CD4-positive, alpha-beta memory T cell (primary cell): ENCODE measurements at regions of chr3 and their contacts with region 1.

Region 1: DNA sequence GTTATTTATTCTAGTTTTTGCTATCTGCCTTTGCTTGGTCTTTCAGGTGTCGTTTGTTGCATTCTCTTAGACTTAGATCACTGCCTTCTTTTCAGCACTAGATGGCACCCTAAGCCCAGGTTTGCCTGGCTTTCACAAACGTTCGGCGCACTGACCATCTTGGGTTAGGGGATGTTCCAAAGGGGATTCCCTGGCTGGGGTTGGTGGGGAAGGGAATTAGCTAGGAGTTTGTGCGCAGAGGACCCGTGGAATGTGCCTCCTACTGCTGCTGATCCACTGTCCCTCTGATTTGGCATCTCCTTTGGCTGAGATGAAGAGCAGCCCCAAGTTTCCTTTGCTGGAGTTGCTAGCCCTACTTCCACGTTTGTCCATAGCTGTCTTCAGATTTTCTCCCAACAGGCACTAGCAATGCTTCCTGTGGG is 33.9 kb downstream of the PFN2 start:
- DNase-seq: peak; percentile 31 to 46 (median 39)
- H3K4me3 ChIP-seq: no peak overlapping the region
- H3K4me3 Mint-ChIP-seq: peak overlapping the region in 2 of 8 donors; percentile 23 to 47
- H3K27ac ChIP-seq: no peak overlapping the region
- H3K27ac Mint-ChIP-seq: peak overlapping the region in 1 of 7 donors; percentile 83
- H3K4me1 ChIP-seq: peaks cover 4% of the 10 kb centered on the region
- H3K4me1 Mint-ChIP-seq: peaks cover 11 to 22% (median 20%) of the 10 kb centered on the region in 4 donors
- H3K27me3 ChIP-seq: no peaks in the 10 kb centered on the region
- H3K27me3 Mint-ChIP-seq: no peaks in the 10 kb centered on the region

Region 2: GRCh38 chr3:149925860-149926259 is 11.0 kb before region 1 on chr3:
- CTCF ChIA-PET with region 1: interaction called, 16 read pairs
- POLR2A ChIA-PET with region 1: no interaction called
- intact Hi-C with region 1: no loop called
- DNase-seq: no peak
- H3K4me3 ChIP-seq: no peak overlapping the region
- H3K4me3 Mint-ChIP-seq: no peak overlapping the region
- H3K27ac ChIP-seq: no peak overlapping the region
- H3K27ac Mint-ChIP-seq: no peak overlapping the region
- H3K4me1 ChIP-seq: no peaks in the 10 kb centered on the region
- H3K4me1 Mint-ChIP-seq: peaks cover 5 to 6% (median 5%) of the 10 kb centered on the region in 4 donors
- H3K27me3 ChIP-seq: no peaks in the 10 kb centered on the region
- H3K27me3 Mint-ChIP-seq: no peaks in the 10 kb centered on the region

Region 3: DNA sequence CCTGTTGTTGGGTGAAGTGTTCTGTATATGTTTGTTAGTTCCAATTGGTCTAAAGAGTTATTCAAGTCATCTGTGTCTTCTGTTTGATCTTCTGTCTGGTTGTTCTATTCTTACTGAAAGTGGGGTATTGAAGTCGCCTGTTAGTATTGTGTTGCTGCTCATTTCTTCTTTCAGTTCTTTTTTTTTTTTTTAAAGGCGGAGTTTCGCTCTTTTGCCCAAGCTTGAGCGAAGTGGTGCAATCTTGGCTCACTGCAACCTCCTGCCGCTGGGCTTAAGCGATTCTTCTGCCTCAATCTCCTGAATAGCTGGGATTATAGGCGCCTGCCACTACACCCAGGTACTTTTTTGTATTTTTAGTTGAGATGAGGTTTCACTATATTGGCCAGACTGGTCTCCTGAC is 10.4 kb after region 1 on chr3:
- CTCF ChIA-PET with region 1: interaction called, 14 read pairs
- POLR2A ChIA-PET with region 1: no interaction called
- intact Hi-C with region 1: no loop called
- DNase-seq: no peak
- H3K4me3 ChIP-seq: no peak overlapping the region
- H3K4me3 Mint-ChIP-seq: no peak overlapping the region
- H3K27ac ChIP-seq: no peak overlapping the region
- H3K27ac Mint-ChIP-seq: peak overlapping the region in 2 of 7 donors; percentile 23 to 27
- H3K4me1 ChIP-seq: no peaks in the 10 kb centered on the region
- H3K4me1 Mint-ChIP-seq: peaks cover 2 to 42% (median 14%) of the 10 kb centered on the region in 4 donors
- H3K27me3 ChIP-seq: no peaks in the 10 kb centered on the region
- H3K27me3 Mint-ChIP-seq: no peaks in the 10 kb centered on the region

Region 4: DNA sequence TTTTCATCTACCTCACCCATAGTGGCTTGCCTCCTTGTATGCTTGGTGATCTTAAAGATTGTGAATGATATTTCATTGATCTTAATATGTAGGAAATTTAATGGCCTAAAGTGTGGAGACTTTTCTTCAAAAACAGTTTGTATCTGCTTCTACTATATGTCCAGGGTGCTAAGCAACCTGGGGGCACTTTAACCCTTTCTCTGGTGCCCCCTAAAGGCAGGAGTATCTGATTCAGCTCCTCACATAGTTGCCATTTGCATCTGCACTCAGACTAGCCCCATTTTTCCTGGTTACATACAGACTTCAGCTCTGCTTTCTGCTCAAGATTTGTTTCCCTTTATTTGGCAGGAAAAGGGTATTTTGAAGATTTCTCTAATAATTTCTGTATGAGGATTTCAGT is 39.1 kb after region 1 on chr3:
- CTCF ChIA-PET with region 1: no interaction called
- POLR2A ChIA-PET with region 1: no interaction called
- intact Hi-C with region 1: no loop called
- DNase-seq: no peak
- H3K4me3 ChIP-seq: no peak overlapping the region
- H3K4me3 Mint-ChIP-seq: no peak overlapping the region
- H3K27ac ChIP-seq: no peak overlapping the region
- H3K27ac Mint-ChIP-seq: no peak overlapping the region
- H3K4me1 ChIP-seq: peaks cover 5% of the 10 kb centered on the region
- H3K4me1 Mint-ChIP-seq: peaks cover 6 to 10% (median 8%) of the 10 kb centered on the region in 4 donors
- H3K27me3 ChIP-seq: peaks cover 7% of the 10 kb centered on the region
- H3K27me3 Mint-ChIP-seq: peaks cover 12 to 18% of the 10 kb centered on the region in 2 donors

Region 5: GRCh38 chr3:150183678-150184425 is 247.0 kb after region 1 on chr3:
- CTCF ChIA-PET with region 1: interaction called, 17 read pairs
- POLR2A ChIA-PET with region 1: no interaction called
- intact Hi-C with region 1: loop called (anchors 1 kb)
- DNase-seq: peak in 4 of 5 donors; percentile 32 to 48 (median 39)
- H3K4me3 ChIP-seq: no peak overlapping the region
- H3K4me3 Mint-ChIP-seq: no peak overlapping the region
- H3K27ac ChIP-seq: no peak overlapping the region
- H3K27ac Mint-ChIP-seq: no peak overlapping the region
- H3K4me1 ChIP-seq: peaks cover 4% of the 10 kb centered on the region
- H3K4me1 Mint-ChIP-seq: no peaks in the 10 kb centered on the region
- H3K27me3 ChIP-seq: no peaks in the 10 kb centered on the region
- H3K27me3 Mint-ChIP-seq: peaks cover 0 to 7% of the 10 kb centered on the region in 2 donors

Region 6: GRCh38 chr3:150220799-150221198 is 284.0 kb after region 1 on chr3:
- CTCF ChIA-PET with region 1: interaction called, 24 read pairs
- POLR2A ChIA-PET with region 1: no interaction called
- intact Hi-C with region 1: loop called (anchors 1 kb)
- DNase-seq: no peak
- H3K4me3 ChIP-seq: no peak overlapping the region
- H3K4me3 Mint-ChIP-seq: no peak overlapping the region
- H3K27ac ChIP-seq: no peak overlapping the region
- H3K27ac Mint-ChIP-seq: no peak overlapping the region
- H3K4me1 ChIP-seq: peaks cover 5% of the 10 kb centered on the region
- H3K4me1 Mint-ChIP-seq: peaks cover 0 to 4% (median 2%) of the 10 kb centered on the region in 4 donors
- H3K27me3 ChIP-seq: peaks cover 9% of the 10 kb centered on the region
- H3K27me3 Mint-ChIP-seq: peaks cover 25 to 49% of the 10 kb centered on the region in 2 donors